CD8-positive, alpha-beta T cell (primary cell): ENCODE measurements at regions of chr10 and their contacts with region 1.

Region 1: GRCh38 chr10:88114368-88114767 is 250.9 kb downstream of the PTEN start:
- DNase-seq: peak in 3 of 9 experiments; percentile 17 to 64 (median 52)
- ATAC-seq: peak; percentile 47
- H3K4me3 ChIP-seq: no peak overlapping the region
- H3K4me3 Mint-ChIP-seq: no peak overlapping the region
- H3K27ac ChIP-seq: no peak overlapping the region
- H3K27ac Mint-ChIP-seq: no peak overlapping the region
- H3K4me1 ChIP-seq: peaks cover 23% of the 10 kb centered on the region
- H3K4me1 Mint-ChIP-seq: peaks cover 16% of the 10 kb centered on the region
- H3K27me3 ChIP-seq: no peaks in the 10 kb centered on the region
- H3K27me3 Mint-ChIP-seq: no peaks in the 10 kb centered on the region
- CTCF ChIP-seq: no peak

Region 2: DNA sequence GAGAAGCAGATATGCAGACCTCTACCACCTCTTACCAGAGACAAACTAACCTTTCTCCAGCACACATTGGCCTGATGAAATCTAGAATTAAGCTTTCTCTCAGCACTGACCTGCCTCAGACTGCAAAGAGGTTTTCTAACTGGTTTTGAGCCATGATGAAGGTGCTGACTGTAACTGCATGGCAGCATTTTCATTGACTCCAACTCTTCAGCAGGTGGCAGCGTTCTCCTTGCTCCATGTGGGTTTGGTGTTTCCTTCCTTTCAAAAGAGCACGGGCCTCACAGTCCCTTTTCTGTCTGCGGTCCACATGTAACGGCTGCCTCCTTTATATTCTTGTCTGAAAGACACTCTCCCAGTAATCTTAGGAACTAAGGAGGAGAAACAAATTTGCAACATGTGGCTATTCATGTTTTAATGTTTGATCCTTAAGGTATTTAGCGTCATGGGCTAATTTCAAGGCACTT is 263.6 kb before region 1 on chr10:
- CTCF ChIA-PET with region 1: interaction called, 22 read pairs
- POLR2A ChIA-PET with region 1: no interaction called
- intact Hi-C with region 1: loop called in 1 of 2 experiments (anchors 1 kb)
- DNase-seq: peak; percentile 2 to 76 (median 51)
- ATAC-seq: peak; percentile 90
- H3K4me3 ChIP-seq: no peak overlapping the region
- H3K4me3 Mint-ChIP-seq: no peak overlapping the region
- H3K27ac ChIP-seq: no peak overlapping the region
- H3K27ac Mint-ChIP-seq: no peak overlapping the region
- H3K4me1 ChIP-seq: no peaks in the 10 kb centered on the region
- H3K4me1 Mint-ChIP-seq: peaks cover 19% of the 10 kb centered on the region
- H3K27me3 ChIP-seq: no peaks in the 10 kb centered on the region
- H3K27me3 Mint-ChIP-seq: no peaks in the 10 kb centered on the region
- CTCF ChIP-seq: peak; percentile 62

Region 3: GRCh38 chr10:88080213-88080612 is 34.2 kb before region 1 on chr10:
- CTCF ChIA-PET with region 1: interaction called, 3 read pairs
- POLR2A ChIA-PET with region 1: no interaction called
- intact Hi-C with region 1: loop called in 1 of 2 experiments (anchors 5 kb)
- DNase-seq: no peak
- ATAC-seq: no peak
- H3K4me3 ChIP-seq: no peak overlapping the region
- H3K4me3 Mint-ChIP-seq: no peak overlapping the region
- H3K27ac ChIP-seq: no peak overlapping the region
- H3K27ac Mint-ChIP-seq: no peak overlapping the region
- H3K4me1 ChIP-seq: no peaks in the 10 kb centered on the region
- H3K4me1 Mint-ChIP-seq: peaks cover 14% of the 10 kb centered on the region
- H3K27me3 ChIP-seq: no peaks in the 10 kb centered on the region
- H3K27me3 Mint-ChIP-seq: no peaks in the 10 kb centered on the region
- CTCF ChIP-seq: no peak

Region 4: DNA sequence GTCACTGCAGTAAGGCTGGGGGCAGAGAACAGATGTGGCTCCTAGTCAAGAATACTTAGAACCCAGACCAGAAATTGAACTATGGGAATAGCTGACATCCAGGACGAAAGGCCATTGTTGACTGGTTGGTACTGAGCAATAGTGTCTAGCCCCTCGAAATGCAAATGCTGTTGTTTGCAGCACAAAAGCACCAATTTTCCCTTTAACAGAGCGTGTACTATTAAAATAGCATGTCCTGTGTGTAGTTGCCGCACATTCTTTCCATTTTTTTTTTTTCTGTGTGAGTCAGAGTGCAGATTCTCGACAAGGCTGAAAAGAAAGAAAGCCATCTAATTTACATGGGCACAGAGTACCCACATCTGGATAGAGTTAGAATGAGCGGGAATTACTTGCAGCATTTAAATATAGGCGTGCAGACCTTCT is 51.5 kb after region 1 on chr10:
- CTCF ChIA-PET with region 1: no interaction called
- POLR2A ChIA-PET with region 1: no interaction called
- intact Hi-C with region 1: no loop called
- DNase-seq: no peak
- ATAC-seq: no peak
- H3K4me3 ChIP-seq: no peak overlapping the region
- H3K4me3 Mint-ChIP-seq: no peak overlapping the region
- H3K27ac ChIP-seq: no peak overlapping the region
- H3K27ac Mint-ChIP-seq: no peak overlapping the region
- H3K4me1 ChIP-seq: no peaks in the 10 kb centered on the region
- H3K4me1 Mint-ChIP-seq: peaks cover 10% of the 10 kb centered on the region
- H3K27me3 ChIP-seq: no peaks in the 10 kb centered on the region
- H3K27me3 Mint-ChIP-seq: no peaks in the 10 kb centered on the region
- CTCF ChIP-seq: no peak